Heart right ventricle (tissue), 16 donors: ENCODE measurements at regions of chr6 and their contacts with region 1.

Region 1: GRCh38 chr6:43269273-43270007 is 26.2 kb downstream of the TTBK1 start:
- DNase-seq: peak; percentile 25 to 48
- ATAC-seq: peak; percentile 21 to 53 (median 42)
- H3K4me3 ChIP-seq: peak overlapping the region in 9 of 10 donors; percentile 1 to 46 (median 31)
- H3K27ac ChIP-seq: peak overlapping the region in 9 of 10 donors; percentile 41 to 84 (median 73)
- H3K4me1 ChIP-seq: peaks cover 6 to 37% (median 23%) of the 10 kb centered on the region in 9 donors
- H3K27me3 ChIP-seq: peaks cover 0 to 51% (median 14%) of the 10 kb centered on the region in 7 donors
- CTCF ChIP-seq: no peak

Region 2: DNA sequence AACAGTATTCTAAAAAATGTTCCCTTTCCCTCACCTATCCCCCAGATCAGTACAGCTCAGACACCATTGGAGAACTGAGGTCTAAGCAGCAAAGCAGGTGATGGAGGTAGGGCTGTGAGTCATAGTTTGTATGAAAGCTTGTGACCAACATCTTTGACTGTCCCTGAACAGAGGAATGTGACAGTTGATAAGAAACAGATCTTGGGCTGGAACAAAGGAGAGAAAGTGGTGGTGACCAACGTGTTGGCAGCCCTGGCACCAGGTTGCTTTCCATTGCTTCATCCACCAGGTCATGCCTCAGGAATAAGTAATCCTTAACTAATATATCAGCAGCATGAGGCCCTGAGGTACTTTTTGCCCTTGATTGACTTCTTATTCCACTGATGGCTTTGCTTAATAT is 59.1 kb after region 1 on chr6:
- intact Hi-C with region 1: loop called in 6 of 10 experiments (anchors 2 to 10 kb)
- DNase-seq: peak; percentile 38 to 57
- ATAC-seq: peak; percentile 67 to 98 (median 94)
- H3K4me3 ChIP-seq: no peak overlapping the region
- H3K27ac ChIP-seq: peak overlapping the region; percentile 58 to 92 (median 75)
- H3K4me1 ChIP-seq: peaks cover 0 to 15% (median 0%) of the 10 kb centered on the region in 9 donors
- H3K27me3 ChIP-seq: no peaks in the 10 kb centered on the region
- CTCF ChIP-seq: no peak

Region 3: DNA sequence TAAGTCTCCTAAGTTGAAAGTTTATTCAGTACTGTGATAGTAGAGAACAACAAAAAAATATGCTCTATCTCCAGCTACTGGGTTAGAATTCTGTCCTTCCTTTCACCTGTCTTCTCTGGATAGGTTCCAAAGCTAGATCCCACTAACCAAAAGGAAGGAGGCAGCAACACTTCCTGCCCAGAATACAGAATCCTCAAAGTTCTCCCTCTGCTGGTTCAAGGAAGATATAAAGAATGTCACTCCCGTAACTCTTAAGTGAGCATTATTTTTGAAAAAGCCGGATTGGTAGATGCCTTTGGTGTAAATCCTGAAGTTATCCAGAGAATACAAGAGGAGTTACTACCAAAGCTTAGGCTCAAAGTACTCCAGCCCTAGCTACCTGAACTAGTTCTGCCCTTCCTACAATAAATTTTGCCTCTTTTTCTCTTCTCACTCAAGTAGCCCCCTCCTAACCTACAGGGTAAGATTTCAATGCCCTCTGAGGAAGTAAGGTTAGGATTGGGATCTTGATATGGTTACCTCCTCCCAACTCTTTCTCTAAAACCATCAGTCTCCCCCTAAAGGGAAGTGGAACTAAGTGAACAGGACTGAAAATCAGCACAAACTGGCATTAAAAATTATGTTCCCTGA is 65.1 kb after region 1 on chr6:
- intact Hi-C with region 1: loop called in 8 of 10 experiments (anchors 2 to 10 kb)
- DNase-seq: no peak
- ATAC-seq: peak in 3 of 8 donors; percentile 28 to 73 (median 37)
- H3K4me3 ChIP-seq: no peak overlapping the region
- H3K27ac ChIP-seq: peak overlapping the region in 3 of 10 donors; percentile 9 to 25 (median 23)
- H3K4me1 ChIP-seq: peaks cover 0 to 25% (median 13%) of the 10 kb centered on the region in 9 donors
- H3K27me3 ChIP-seq: no peaks in the 10 kb centered on the region
- CTCF ChIP-seq: peak; percentile 24 to 63 (median 53)

Region 4: DNA sequence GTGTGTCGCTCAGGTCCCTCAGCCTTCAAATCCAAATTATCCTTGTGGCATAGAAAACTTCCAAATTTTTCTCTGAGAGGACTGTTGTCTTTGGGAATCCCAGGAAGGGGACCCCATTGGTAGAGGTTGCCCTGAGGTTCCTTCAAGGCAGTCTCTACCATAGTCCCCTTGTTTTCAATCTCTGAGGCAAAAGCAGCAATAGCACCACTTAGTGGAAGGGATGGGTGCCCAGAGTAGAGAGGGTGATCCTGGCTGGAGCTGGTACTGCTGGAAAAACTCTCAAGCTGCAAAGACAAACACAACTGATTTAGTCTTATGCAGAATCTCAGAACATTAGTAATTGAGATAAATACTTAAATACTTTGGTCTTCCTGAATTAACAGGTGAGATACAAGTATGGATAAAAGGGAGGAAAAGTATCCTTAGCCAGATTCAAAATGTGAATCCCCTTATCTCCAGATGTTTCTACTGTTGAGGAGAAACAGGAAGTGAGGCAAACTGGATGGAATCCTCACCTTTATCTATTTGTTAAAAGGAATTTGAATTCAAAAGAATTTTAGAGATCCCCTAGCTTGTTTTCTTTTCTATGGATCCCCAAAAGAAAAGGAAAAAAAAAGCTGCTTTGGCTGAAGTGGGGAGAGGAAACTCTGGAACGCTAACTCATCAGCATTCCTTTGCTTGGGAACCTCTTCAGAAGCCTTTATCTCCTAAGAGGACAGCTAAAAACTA is 86.6 kb after region 1 on chr6:
- intact Hi-C with region 1: loop called in 6 of 10 experiments (anchors 2 to 10 kb)
- DNase-seq: peak in 1 of 2 donors; percentile 15
- ATAC-seq: peak in 7 of 8 donors; percentile 71 to 87 (median 79)
- H3K4me3 ChIP-seq: no peak overlapping the region
- H3K27ac ChIP-seq: peak overlapping the region in 1 of 10 donors; percentile 12
- H3K4me1 ChIP-seq: peaks cover 0 to 9% (median 0%) of the 10 kb centered on the region in 9 donors
- H3K27me3 ChIP-seq: no peaks in the 10 kb centered on the region
- CTCF ChIP-seq: peak; percentile 10 to 65 (median 47)

Region 5: DNA sequence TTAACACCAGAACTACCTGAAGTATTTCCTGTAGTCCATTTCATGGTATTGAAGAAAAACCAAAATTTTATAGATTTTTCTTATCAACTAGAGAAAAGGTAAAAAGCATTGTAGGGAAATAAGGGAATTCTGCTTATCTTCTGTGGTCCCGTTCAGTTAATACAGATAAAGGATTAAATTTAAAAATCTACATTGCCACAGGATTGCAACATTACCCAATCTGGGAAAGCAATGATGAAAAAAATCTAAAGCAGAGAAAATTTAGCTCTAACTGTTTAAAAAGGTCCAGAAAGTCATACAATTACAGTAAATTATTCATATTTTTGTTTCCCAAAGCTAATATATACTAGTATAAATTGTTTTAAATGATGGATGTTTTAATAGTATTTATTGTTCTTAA is 324.5 kb after region 1 on chr6:
- intact Hi-C with region 1: no loop called
- DNase-seq: no peak
- ATAC-seq: no peak
- H3K4me3 ChIP-seq: no peak overlapping the region
- H3K27ac ChIP-seq: no peak overlapping the region
- H3K4me1 ChIP-seq: no peaks in the 10 kb centered on the region
- H3K27me3 ChIP-seq: no peaks in the 10 kb centered on the region
- CTCF ChIP-seq: no peak

Region 6: GRCh38 chr6:43629505-43630300 is 360.3 kb after region 1 on chr6:
- intact Hi-C with region 1: no loop called
- DNase-seq: peak; percentile 93 to 97
- ATAC-seq: peak; percentile 87 to 95 (median 91)
- H3K4me3 ChIP-seq: peak overlapping the region; percentile 63 to 98 (median 86)
- H3K27ac ChIP-seq: peak overlapping the region; percentile 94 to 99 (median 98)
- H3K4me1 ChIP-seq: peaks cover 10 to 39% (median 29%) of the 10 kb centered on the region in 9 donors
- H3K27me3 ChIP-seq: no peaks in the 10 kb centered on the region
- CTCF ChIP-seq: no peak